GM10248 (cell line): ENCODE measurements at regions of chr11 and their contacts with region 1.

Region 1: GRCh38 chr11:46346886-46347636 is at the start of gene DGKZ:
- DNase-seq: peak; percentile 94
- CTCF ChIP-seq: peak; percentile 97

Region 2: GRCh38 chr11:46083972-46084371 is 263.1 kb before region 1 on chr11:
- CTCF ChIA-PET with region 1: no interaction called
- POLR2A ChIA-PET with region 1: no interaction called
- DNase-seq: no peak
- CTCF ChIP-seq: no peak

Region 3: DNA sequence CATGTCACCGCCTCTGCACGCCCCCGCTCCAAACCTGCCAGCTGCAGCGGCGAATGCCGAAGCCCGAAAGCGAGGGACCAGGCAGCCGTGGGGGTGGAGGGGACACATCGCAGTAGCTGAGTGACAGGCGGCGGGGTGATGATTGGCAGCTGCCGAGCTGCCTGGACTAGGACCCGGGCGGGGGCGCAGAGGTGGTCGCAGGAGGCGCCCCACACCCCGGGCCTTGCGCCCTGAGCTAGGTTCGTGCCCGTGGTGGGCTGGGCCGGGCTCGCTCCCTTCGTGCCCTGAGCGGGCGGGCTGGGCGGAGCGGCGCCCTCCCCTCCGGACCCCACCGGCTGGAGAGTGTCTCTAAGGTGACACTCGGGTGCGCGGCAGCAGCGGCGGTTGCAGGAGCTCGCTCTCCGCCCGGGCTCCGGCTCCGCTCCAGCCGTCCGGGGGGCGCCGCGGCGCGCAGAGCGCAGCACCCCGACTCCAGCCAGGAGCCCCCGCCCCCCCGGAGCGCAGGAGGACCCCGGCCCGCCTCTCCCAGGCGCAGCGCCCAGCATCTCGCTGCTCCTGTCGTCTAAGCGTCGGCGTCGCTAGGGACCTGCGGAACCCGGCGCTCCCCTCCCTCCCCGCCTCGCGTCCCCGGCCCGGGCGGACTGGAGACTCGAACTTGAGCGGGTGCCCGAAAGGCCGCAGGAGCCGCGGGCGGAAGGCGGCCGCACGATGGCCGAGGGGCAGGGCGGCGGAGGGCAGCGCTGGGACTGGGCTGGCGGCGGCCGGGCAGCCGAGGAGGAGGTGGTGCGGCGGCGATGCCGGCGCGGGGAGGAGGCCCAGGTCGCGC is 14.3 kb before region 1 on chr11:
- CTCF ChIA-PET with region 1: interaction called, 15 read pairs
- POLR2A ChIA-PET with region 1: interaction called, 6 read pairs
- DNase-seq: no peak
- CTCF ChIP-seq: no peak